Activated naive CD4-positive, alpha-beta T cell treated with anti-CD3 and anti-CD28 coated beads, Interleukin-2, amount 10 ng/mL, durations not matched to agents 7 days and 5 days (primary cell): ENCODE measurements at regions of chr5 and their contacts with region 1.

Region 1: DNA sequence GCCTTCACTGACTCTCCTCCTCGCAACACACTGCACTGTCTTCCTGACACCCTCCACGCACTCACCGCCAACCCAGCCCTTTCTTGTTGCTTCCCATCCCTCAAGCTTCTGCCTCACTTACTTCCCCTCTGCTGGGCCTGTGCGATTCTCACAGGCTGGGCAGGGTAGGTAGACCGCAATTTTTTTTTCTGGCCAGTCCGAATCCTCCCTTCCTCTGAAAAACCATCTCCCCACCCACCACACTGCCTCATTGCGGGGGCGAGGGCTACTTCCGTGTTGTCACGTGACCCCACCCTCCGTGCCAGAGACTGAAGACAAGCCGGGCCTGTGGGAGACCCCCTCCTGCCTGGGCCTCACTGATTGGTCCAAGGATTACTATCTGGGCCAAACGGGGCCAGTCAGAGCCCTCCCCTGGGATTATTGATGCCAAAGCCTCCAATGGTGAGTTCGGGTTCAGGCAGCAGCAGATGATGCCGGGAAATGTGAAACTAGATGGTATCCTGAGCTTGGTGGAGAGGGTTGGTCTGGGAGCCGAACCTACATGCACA is 73.1 kb downstream of the STK10 start:
- DNase-seq: peak; percentile 88
- H3K4me3 Mint-ChIP-seq: peak overlapping the region; percentile 74
- H3K27ac Mint-ChIP-seq: peak overlapping the region; percentile 96
- H3K4me1 Mint-ChIP-seq: peaks cover 87% of the 10 kb centered on the region
- H3K27me3 Mint-ChIP-seq: no peaks in the 10 kb centered on the region

Region 2: DNA sequence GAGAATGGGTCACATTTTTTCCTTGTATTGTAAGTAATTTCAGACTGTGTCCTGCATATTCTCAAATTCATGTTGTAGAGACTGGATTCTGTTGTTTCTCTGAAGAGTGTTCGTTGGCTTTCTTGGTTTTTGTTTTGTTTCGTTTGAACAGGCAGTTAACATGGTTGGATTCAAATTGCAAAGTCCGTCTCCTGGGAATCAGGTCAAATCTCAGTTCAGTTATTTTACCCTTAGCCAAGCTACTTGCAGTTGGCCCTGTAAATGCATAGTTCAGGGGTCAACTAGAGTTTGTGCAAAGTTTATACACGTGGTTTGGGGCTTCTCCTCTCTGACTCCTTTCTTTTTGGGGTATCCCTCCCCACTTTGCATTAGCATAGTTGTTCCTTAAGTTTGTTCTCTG is 86.8 kb before region 1 on chr5:
- CTCF ChIA-PET with region 1: no interaction called
- DNase-seq: no peak
- H3K4me3 Mint-ChIP-seq: no peak overlapping the region
- H3K27ac Mint-ChIP-seq: no peak overlapping the region
- H3K4me1 Mint-ChIP-seq: no peaks in the 10 kb centered on the region
- H3K27me3 Mint-ChIP-seq: no peaks in the 10 kb centered on the region

Region 3: DNA sequence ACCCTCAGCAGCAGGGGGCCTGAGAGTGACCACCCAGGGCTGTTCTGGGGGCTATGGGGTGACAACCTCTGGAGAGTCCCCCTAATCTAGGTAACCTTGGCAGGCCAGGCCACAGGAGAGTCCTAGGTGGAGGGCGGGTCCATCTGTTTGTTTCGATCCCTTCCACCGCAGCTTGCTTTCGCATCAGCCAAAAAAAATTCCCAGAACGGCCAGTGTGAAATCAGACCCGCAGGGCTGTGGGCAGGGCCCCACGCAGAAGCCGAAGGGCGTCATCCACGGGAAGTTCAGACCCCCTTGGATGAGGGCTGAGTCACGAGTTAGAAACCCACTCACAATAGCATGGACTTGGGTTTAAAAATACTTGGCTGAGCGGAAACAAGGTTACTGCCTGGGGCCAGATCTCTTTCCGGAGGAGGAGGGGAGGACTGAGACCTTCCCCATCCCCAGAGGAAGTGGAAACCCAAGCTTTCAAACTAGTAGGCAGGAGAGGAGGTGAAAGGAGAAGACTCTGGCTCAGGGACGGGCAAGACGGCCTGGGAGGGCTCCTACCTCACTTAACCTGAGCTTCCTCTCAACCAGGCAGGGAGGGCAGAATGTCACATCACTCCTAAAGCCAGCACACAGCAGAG is 64.5 kb after region 1 on chr5:
- CTCF ChIA-PET with region 1: interaction called, 14 read pairs
- DNase-seq: peak; percentile 66
- H3K4me3 Mint-ChIP-seq: peak overlapping the region; percentile 95
- H3K27ac Mint-ChIP-seq: peak overlapping the region; percentile 96
- H3K4me1 Mint-ChIP-seq: peaks cover 92% of the 10 kb centered on the region
- H3K27me3 Mint-ChIP-seq: no peaks in the 10 kb centered on the region